Ovary (tissue), 10 donors: ENCODE measurements at regions of chr5 and their contacts with region 1.

Region 1: GRCh38 chr5:174532455-174533453 is 191.6 kb upstream of the MSX2 start:
- DNase-seq: peak in 4 of 5 donors; percentile 22 to 55 (median 38)
- H3K4me3 ChIP-seq: no peak overlapping the region
- H3K27ac ChIP-seq: no peak overlapping the region
- H3K4me1 ChIP-seq: no peaks in the 10 kb centered on the region
- H3K27me3 ChIP-seq: no peaks in the 10 kb centered on the region
- CTCF ChIP-seq: no peak
- EP300 ChIP-seq: no peak
- POLR2A ChIP-seq: no peak

Region 2: DNA sequence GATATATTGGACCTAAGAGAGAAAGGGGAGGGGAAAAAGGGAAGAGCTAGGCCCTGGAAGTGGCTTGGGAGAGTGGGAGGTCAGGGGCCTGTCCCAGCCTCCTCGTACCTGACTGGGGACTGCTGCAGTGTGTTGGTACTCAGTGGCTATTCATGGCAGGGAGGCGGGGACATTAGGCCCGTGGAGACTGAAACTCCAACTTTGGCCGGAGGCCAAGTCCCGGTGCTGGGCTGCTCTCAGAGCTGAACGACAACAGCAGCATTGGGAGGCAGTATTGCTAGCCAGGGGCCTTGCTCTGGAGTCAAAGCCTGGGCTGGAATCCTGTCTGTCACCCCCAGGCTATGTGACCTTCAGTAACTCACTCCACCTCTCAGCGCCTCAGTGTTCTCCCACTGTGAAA is 1853.9 kb before region 1 on chr5:
- intact Hi-C with region 1: loop called in 1 of 4 experiments (anchors 10 kb)
- DNase-seq: peak in 1 of 5 donors; percentile 67
- H3K4me3 ChIP-seq: no peak overlapping the region
- H3K27ac ChIP-seq: no peak overlapping the region
- H3K4me1 ChIP-seq: peaks cover 3% of the 10 kb centered on the region
- H3K27me3 ChIP-seq: no peaks in the 10 kb centered on the region
- CTCF ChIP-seq: no peak
- EP300 ChIP-seq: no peak
- POLR2A ChIP-seq: no peak

Region 3: GRCh38 chr5:174925586-174925985 is 392.8 kb after region 1 on chr5:
- intact Hi-C with region 1: loop called in 1 of 4 experiments (anchors 5 kb)
- DNase-seq: no peak
- H3K4me3 ChIP-seq: no peak overlapping the region
- H3K27ac ChIP-seq: no peak overlapping the region
- H3K4me1 ChIP-seq: no peaks in the 10 kb centered on the region
- H3K27me3 ChIP-seq: no peaks in the 10 kb centered on the region
- CTCF ChIP-seq: no peak
- EP300 ChIP-seq: no peak
- POLR2A ChIP-seq: no peak